Ascending aorta (tissue), 2 donors: ENCODE measurements at regions of chr3 and their contacts with region 1.

Region 1: DNA sequence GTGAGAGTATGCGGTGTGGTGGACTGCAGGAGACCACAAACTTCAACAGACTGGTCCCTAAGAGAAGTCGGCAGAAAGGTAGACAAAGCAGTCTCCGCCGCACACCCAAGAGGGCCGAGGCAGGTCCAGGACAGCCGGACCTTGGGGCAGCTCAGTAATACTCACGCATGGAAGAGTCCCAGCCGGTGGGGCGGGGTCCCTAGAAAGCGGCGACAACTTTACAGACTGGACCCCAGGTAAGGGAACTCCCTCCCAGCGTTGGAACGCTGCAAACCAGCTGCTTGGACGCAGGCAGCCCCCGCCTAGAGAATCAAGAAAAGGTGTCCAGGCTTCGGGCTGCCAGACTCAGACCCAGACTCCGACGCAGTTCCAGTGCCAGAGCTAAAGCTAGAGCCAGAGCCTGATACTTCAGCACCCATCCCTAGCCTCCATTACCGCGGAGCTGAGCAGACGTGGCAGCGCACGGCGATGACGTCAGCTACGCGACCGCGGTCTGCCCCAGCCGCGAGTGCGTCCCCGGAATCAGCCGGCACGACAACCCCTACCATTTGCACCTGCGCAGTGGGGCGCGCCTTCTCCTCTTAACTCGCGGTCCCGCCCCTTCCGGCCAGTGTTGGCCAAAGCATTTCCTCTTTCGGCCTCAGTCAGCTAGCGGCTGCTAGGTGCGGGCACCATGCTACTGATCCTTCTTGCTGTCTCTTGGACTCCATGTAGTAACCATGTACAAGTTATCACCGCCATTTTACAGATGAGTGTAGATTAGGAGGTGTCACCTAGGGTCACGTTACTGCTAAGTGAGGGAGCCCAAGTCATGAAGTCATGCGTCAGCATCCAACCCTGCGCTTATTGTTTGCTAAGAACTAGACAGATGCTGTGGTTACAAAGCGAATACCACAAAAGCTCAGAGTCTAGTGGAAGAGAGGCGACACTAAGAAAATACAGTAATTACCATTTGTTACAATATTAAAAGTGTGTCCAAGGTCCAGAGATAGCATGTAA is at the start of gene TMEM39A:
- DNase-seq: peak; percentile 97 to 100
- H3K4me3 ChIP-seq: peak within 1 kb of the TSS; percentile 84 to 91
- H3K27ac ChIP-seq: peak within 1 kb of the TSS; percentile 87 to 92
- H3K4me1 ChIP-seq: peaks cover 4 to 20% of the 10 kb centered on the region in 2 donors
- H3K27me3 ChIP-seq: no peaks in the 10 kb centered on the region
- CTCF ChIP-seq: no peak
- total RNA-seq, gene TMEM39A: 115 TPM

Region 2: GRCh38 chr3:119498186-119498987 is 34.9 kb after region 1 on chr3 and contains the start of gene TIMMDC1:
- intact Hi-C with region 1: loop called (anchors 1 kb)
- DNase-seq: peak; percentile 90 to 98
- H3K4me3 ChIP-seq: peak within 1 kb of the TSS; percentile 78 to 92
- H3K27ac ChIP-seq: peak within 1 kb of the TSS; percentile 93 to 94
- H3K4me1 ChIP-seq: peaks cover 5 to 24% of the 10 kb centered on the region in 2 donors
- H3K27me3 ChIP-seq: no peaks in the 10 kb centered on the region
- CTCF ChIP-seq: no peak
- total RNA-seq, gene TIMMDC1: 31.1 TPM